Kidney (tissue), 22 donors: ENCODE measurements at regions of chr15 and their contacts with region 1.

Region 1: GRCh38 chr15:73972984-73973682 is 19.0 kb downstream of the STOML1 start:
- DNase-seq: peak; percentile 90 to 95 (median 91)
- H3K4me3 ChIP-seq: no peak overlapping the region
- H3K27ac ChIP-seq: no peak overlapping the region
- H3K4me1 ChIP-seq: peaks cover 0 to 4% (median 4%) of the 10 kb centered on the region in 3 donors
- H3K27me3 ChIP-seq: no peaks in the 10 kb centered on the region
- CTCF ChIP-seq: peak; percentile 95

Region 2: GRCh38 chr15:73457334-73457733 is 515.8 kb before region 1 on chr15:
- intact Hi-C with region 1: no loop called
- DNase-seq: no peak
- H3K4me3 ChIP-seq: no peak overlapping the region
- H3K27ac ChIP-seq: no peak overlapping the region
- H3K4me1 ChIP-seq: no peaks in the 10 kb centered on the region
- H3K27me3 ChIP-seq: no peaks in the 10 kb centered on the region
- CTCF ChIP-seq: no peak

Region 3: DNA sequence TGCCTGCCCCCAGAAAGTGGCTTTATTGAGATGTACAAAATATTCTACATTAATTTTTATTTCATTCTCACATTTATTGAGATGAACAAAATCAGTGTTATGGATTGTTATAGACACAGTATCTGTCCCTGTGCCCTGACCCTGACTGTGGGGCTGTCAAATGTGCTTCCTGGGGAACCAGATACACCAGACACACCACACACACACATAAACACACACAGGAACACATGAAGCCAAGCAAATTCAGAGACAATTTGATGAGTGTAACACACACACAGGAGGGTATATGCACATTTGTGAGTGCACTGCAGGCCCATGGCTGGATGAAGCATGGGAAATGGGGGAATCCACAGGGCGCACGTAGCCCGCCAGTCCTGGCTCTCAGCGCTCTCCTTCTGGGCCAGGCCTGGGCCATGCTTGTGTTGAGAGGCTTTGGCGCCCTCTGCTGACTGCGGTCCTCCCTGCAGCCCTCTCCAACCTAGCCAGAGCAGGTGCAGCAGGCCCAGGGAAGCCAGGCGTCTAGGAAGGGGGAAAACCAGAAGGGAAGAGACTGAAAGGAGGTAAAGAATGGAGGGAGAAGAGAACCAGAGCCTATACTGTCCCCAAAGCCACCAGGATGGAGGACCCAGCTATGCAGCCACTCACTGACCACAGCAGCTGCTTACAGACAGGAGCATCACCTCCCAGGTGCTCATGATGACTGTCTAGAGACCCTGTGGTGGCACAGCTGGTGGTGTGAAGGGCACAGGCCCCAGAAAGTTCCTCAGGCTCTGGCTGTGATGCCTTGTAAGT is 64.9 kb before region 1 on chr15:
- intact Hi-C with region 1: no loop called
- DNase-seq: peak; percentile 79 to 91 (median 85)
- H3K4me3 ChIP-seq: no peak overlapping the region
- H3K27ac ChIP-seq: no peak overlapping the region
- H3K4me1 ChIP-seq: peaks cover 0 to 5% (median 2%) of the 10 kb centered on the region in 3 donors
- H3K27me3 ChIP-seq: no peaks in the 10 kb centered on the region
- CTCF ChIP-seq: peak; percentile 95

Region 4: GRCh38 chr15:74127260-74127953 is 154.3 kb after region 1 on chr15:
- intact Hi-C with region 1: no loop called
- DNase-seq: peak; percentile 93 to 96 (median 95)
- H3K4me3 ChIP-seq: peak overlapping the region; percentile 36 to 53 (median 40)
- H3K27ac ChIP-seq: no peak overlapping the region
- H3K4me1 ChIP-seq: peaks cover 0 to 13% (median 0%) of the 10 kb centered on the region in 3 donors
- H3K27me3 ChIP-seq: peaks cover 32% of the 10 kb centered on the region
- CTCF ChIP-seq: peak; percentile 100

Region 5: GRCh38 chr15:74208901-74209559 is 235.9 kb after region 1 on chr15:
- intact Hi-C with region 1: no loop called
- DNase-seq: peak in 4 of 5 donors; percentile 82 to 90 (median 84)
- H3K4me3 ChIP-seq: no peak overlapping the region
- H3K27ac ChIP-seq: no peak overlapping the region
- H3K4me1 ChIP-seq: peaks cover 11 to 24% (median 12%) of the 10 kb centered on the region in 3 donors
- H3K27me3 ChIP-seq: no peaks in the 10 kb centered on the region
- CTCF ChIP-seq: no peak

Region 6: GRCh38 chr15:74322181-74323076 is 349.3 kb after region 1 on chr15:
- intact Hi-C with region 1: loop called (anchors 5 kb)
- DNase-seq: peak; percentile 68 to 88 (median 80)
- H3K4me3 ChIP-seq: no peak overlapping the region
- H3K27ac ChIP-seq: no peak overlapping the region
- H3K4me1 ChIP-seq: no peaks in the 10 kb centered on the region
- H3K27me3 ChIP-seq: no peaks in the 10 kb centered on the region
- CTCF ChIP-seq: peak; percentile 86